Left cardiac atrium (tissue), 4 donors: ENCODE measurements at regions of chr11 and their contacts with region 1.

Region 1: DNA sequence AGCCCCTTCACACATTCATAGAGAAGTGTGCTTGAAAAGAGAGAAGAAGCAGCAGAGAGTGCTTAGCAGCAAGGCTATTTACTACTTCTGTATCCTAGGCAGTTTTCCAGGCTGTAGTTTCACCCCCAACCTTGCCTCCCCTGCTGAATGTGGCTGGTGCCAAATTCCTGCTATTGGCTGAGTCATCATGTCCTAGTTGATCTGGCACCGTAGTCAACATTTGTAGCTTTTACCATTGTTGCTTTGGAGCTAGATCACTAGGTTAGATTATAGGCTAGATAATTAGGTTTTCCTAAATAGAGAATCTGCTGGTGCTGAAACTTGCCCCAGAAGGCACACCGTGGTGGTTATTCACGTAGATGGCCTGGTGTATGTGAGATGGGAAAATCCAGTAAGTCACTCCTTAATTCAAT is 32.7 kb downstream of the ARHGAP42 start:
- DNase-seq: peak; percentile 69
- ATAC-seq: peak; percentile 90 to 96

Region 2: GRCh38 chr11:100739666-100740065 is 19.9 kb after region 1 on chr11:
- intact Hi-C with region 1: loop called in 1 of 2 experiments (anchors 2 kb)
- DNase-seq: no peak
- ATAC-seq: peak; percentile 83 to 93